ENCODE measurements at regions of chr1 and their contacts with region 1.

Region 1: GRCh38 chr1:20786253-20787028 is 666 bp downstream of the HP1BP3 start:
- DNase-seq: peak; percentile 98
- H3K4me3 ChIP-seq: peak overlapping the region; percentile 99
- H3K4me3 Mint-ChIP-seq: peak overlapping the region; percentile 98
- H3K27ac Mint-ChIP-seq: peak overlapping the region; percentile 95
- H3K4me1 ChIP-seq: peaks cover 5% of the 10 kb centered on the region
- H3K4me1 Mint-ChIP-seq: no peaks in the 10 kb centered on the region
- H3K27me3 ChIP-seq: no peaks in the 10 kb centered on the region
- H3K27me3 Mint-ChIP-seq: no peaks in the 10 kb centered on the region
- CTCF ChIP-seq: no peak

Region 2: GRCh38 chr1:20753589-20753988 is 32.9 kb before region 1 on chr1:
- CTCF ChIA-PET with region 1: no interaction called
- POLR2A ChIA-PET with region 1: no interaction called
- intact Hi-C with region 1: no loop called
- DNase-seq: no peak
- H3K4me3 ChIP-seq: no peak overlapping the region
- H3K4me3 Mint-ChIP-seq: no peak overlapping the region
- H3K27ac Mint-ChIP-seq: no peak overlapping the region
- H3K4me1 ChIP-seq: no peaks in the 10 kb centered on the region
- H3K4me1 Mint-ChIP-seq: no peaks in the 10 kb centered on the region
- H3K27me3 ChIP-seq: no peaks in the 10 kb centered on the region
- H3K27me3 Mint-ChIP-seq: no peaks in the 10 kb centered on the region
- CTCF ChIP-seq: no peak

Region 3: GRCh38 chr1:20847611-20848080 is 61.2 kb after region 1 on chr1:
- CTCF ChIA-PET with region 1: no interaction called
- POLR2A ChIA-PET with region 1: no interaction called
- intact Hi-C with region 1: loop called (anchors 10 kb)
- DNase-seq: no peak
- H3K4me3 ChIP-seq: no peak overlapping the region
- H3K4me3 Mint-ChIP-seq: no peak overlapping the region
- H3K27ac Mint-ChIP-seq: no peak overlapping the region
- H3K4me1 ChIP-seq: peaks cover 6% of the 10 kb centered on the region; the same call in 1 of the 2 replicates
- H3K4me1 Mint-ChIP-seq: no peaks in the 10 kb centered on the region
- H3K27me3 ChIP-seq: no peaks in the 10 kb centered on the region
- H3K27me3 Mint-ChIP-seq: no peaks in the 10 kb centered on the region
- CTCF ChIP-seq: no peak

Region 4: GRCh38 chr1:21176586-21177555 is 390.4 kb after region 1 on chr1 and contains the start of gene EIF4G3:
- CTCF ChIA-PET with region 1: no interaction called
- POLR2A ChIA-PET with region 1: interaction called, 3 read pairs
- intact Hi-C with region 1: loop called (anchors 10 kb)
- DNase-seq: peak; percentile 97 to 99
- H3K4me3 ChIP-seq: peak within 1 kb of the TSS; percentile 65
- H3K4me3 Mint-ChIP-seq: peak within 1 kb of the TSS; percentile 90
- H3K27ac Mint-ChIP-seq: peak within 1 kb of the TSS; percentile 93
- H3K4me1 ChIP-seq: peaks cover 9% of the 10 kb centered on the region
- H3K4me1 Mint-ChIP-seq: peaks cover 10% of the 10 kb centered on the region
- H3K27me3 ChIP-seq: no peaks in the 10 kb centered on the region
- H3K27me3 Mint-ChIP-seq: no peaks in the 10 kb centered on the region
- CTCF ChIP-seq: no peak
- total RNA-seq, gene EIF4G3: 55.3 and 55.4 TPM in 2 replicates

Measured in Caco-2 (cell line).